K562 (cell line): ENCODE measurements at regions of chr6 and their contacts with region 1.

Region 1: GRCh38 chr6:39228992-39229767 is at the start of gene KCNK5:
- DNase-seq: peak; percentile 98
- ATAC-seq: peak; percentile 94
- H3K4me3 ChIP-seq: peak within 1 kb of the TSS; percentile 73
- H3K27ac ChIP-seq: peak within 1 kb of the TSS; percentile 92
- H3K4me1 ChIP-seq: peaks cover 30 to 35% of the 10 kb centered on the region in 2 experiments
- H3K27me3 ChIP-seq: no peaks in the 10 kb centered on the region
- CTCF ChIP-seq: peak; percentile 90 to 97 (median 95)
- EP300 ChIP-seq: no peak
- POLR2A ChIP-seq: peak; percentile 96
- RAD21 ChIP-seq: peak; percentile 70 to 79
- polyA plus RNA-seq, gene KCNK5: 1.5 to 1.9 TPM

Region 2: DNA sequence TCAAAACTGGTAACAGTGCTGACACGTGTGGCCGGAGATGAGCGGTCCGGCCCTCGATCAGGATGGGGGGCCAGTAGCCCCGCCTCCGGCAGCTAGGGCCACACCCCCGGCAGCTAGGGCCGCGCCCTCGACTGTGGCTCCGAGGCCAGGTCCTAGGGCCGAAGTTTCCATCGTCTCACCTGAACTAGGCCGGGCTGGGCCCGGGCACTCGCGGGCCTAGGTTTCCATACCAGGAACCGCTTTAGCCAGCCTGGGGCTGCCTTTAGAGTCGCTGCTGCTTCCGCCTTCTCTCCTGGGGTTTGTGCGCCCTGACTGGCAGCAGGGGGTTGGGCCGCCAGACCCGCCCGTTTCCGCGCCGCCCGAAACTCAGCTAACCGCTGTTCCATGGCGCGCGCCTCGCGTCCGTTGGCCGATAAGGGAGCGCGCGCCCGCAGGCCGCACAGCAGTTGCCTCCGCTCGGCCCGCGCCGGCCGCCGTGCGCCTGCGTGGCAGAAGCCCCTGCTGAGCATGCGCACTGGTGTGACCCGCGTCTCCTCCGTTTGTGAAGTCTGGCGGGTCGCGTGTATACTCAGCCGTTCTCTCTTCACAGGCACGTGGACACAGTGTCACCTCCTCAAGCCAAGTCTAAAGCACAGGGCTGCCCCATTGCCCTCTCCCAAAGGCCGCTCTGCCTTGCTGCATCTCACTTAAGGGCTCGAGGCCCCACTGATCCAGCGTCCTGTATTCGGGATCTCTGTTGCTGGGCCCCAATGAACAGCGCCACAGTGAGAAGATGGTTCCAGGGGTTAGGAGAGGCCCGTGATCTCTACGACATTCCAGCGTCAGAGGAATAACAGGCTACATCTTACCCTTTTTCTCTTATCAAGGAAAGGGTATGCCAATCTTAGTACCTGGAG is 114.2 kb before region 1 on chr6 and contains the start of gene SAYSD1:
- CTCF ChIA-PET with region 1: no interaction called
- POLR2A ChIA-PET with region 1: interaction called, 5 read pairs
- in situ Hi-C with region 1: no loop called
- intact Hi-C with region 1: loop called (anchors 10 kb)
- DNase-seq: peak; percentile 96 to 99 (median 98)
- ATAC-seq: peak; percentile 99
- H3K4me3 ChIP-seq: peak within 1 kb of the TSS; percentile 55
- H3K27ac ChIP-seq: peak within 1 kb of the TSS; percentile 87
- H3K4me1 ChIP-seq: peaks cover 6 to 10% of the 10 kb centered on the region in 2 experiments; a peak in 4 of 5 replicates
- H3K27me3 ChIP-seq: peaks cover 0 to 7% of the 10 kb centered on the region in 2 experiments; a peak in 3 of 5 replicates
- CTCF ChIP-seq: no peak
- EP300 ChIP-seq: peak; percentile 78
- POLR2A ChIP-seq: peak; percentile 95
- RAD21 ChIP-seq: no peak
- polyA plus RNA-seq, gene SAYSD1: 3.5 to 4.2 TPM

Region 3: DNA sequence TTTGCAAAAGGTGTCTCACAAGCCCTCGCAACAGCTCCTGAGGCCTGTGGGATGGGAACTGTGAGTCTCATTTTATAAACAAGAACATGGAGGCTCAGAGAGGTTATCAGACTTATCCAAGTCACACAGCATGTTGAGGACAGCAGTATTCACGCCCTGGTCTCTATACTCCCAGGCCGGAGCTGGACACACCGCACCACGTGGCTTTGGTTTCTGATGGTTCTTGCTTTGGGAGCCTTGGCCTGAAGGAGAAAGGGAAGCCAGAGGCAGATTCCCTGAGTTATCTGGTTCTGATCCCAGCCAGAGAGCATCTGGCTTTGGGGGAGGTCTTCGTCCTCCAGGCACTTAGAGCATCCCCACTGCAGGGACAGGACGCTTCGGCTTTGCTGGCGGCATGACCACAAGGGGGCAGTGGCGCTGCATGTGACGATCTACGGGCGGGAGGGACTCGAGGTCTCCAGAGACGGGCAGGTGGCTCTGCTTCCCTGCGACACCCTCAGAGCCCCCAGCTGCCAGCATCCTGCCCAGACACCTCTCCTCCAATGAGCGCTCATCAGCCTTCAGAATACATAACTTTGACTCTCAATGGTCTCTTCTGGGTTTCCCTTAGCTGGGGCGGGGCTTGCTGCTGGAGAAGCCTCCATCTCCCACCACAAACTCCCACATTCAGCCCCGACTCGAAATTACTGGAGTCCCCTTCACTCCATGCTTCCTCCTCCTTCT is 62.8 kb before region 1 on chr6:
- CTCF ChIA-PET with region 1: no interaction called
- POLR2A ChIA-PET with region 1: no interaction called
- in situ Hi-C with region 1: no loop called
- intact Hi-C with region 1: loop called (anchors 5 kb)
- DNase-seq: peak; percentile 89 to 95 (median 92)
- ATAC-seq: peak; percentile 99
- H3K4me3 ChIP-seq: no peak overlapping the region
- H3K27ac ChIP-seq: no peak overlapping the region
- H3K4me1 ChIP-seq: no peaks in the 10 kb centered on the region
- H3K27me3 ChIP-seq: no peaks in the 10 kb centered on the region; a peak in 2 of 5 replicates
- CTCF ChIP-seq: peak; percentile 97
- EP300 ChIP-seq: no peak
- POLR2A ChIP-seq: no peak
- RAD21 ChIP-seq: peak; percentile 98 to 100

Region 4: DNA sequence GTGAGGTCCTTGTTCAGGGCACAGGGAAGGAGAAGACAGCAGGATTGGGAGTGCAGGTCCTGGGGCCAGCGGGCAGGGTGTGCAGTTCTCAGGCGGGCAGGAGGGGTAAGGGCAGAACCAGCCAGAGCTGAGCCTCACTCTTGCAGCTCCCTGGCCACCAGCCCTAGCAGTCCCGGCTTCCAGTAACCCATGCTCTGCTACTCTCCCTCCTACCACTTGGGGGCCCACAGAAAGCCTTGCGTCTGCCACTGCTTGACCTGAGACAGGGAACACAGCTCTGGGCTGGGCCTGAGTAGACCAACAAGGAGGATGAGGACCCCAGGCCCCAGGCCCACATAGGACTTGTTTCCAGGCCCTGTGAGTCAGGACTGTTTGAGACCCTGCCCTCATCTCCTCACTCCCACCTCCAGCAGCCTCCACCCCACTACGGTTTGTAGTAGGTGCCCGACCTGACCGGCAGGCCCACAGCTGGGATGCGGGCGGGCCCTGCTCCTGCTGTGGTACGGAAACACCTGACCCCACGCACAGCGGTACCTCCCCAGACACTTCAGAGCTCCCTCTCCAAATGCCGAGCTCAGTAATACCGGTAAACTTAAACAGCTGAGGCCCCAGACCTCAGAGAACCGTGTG is 39.1 kb before region 1 on chr6:
- CTCF ChIA-PET with region 1: no interaction called
- POLR2A ChIA-PET with region 1: interaction called, 6 read pairs
- in situ Hi-C with region 1: no loop called
- intact Hi-C with region 1: loop called (anchors 1 kb)
- DNase-seq: peak; percentile 58 to 73 (median 64)
- ATAC-seq: peak; percentile 79
- H3K4me3 ChIP-seq: no peak overlapping the region
- H3K27ac ChIP-seq: no peak overlapping the region
- H3K4me1 ChIP-seq: peaks cover 44 to 48% of the 10 kb centered on the region in 2 experiments
- H3K27me3 ChIP-seq: no peaks in the 10 kb centered on the region
- CTCF ChIP-seq: peak; percentile 70 to 72 (median 71)
- EP300 ChIP-seq: no peak
- POLR2A ChIP-seq: no peak
- RAD21 ChIP-seq: peak; percentile 36 to 62; a peak in 3 of 4 replicates

Region 5: GRCh38 chr6:39218873-39219536 is 10.2 kb before region 1 on chr6:
- CTCF ChIA-PET with region 1: no interaction called
- POLR2A ChIA-PET with region 1: interaction called, 33 read pairs
- in situ Hi-C with region 1: no loop called
- intact Hi-C with region 1: no loop called
- DNase-seq: no peak
- ATAC-seq: no peak
- H3K4me3 ChIP-seq: no peak overlapping the region
- H3K27ac ChIP-seq: peak overlapping the region; percentile 39; the same call in 2 of the 3 replicates
- H3K4me1 ChIP-seq: peaks cover 61 to 71% of the 10 kb centered on the region in 2 experiments
- H3K27me3 ChIP-seq: no peaks in the 10 kb centered on the region
- CTCF ChIP-seq: peak in 1 of 3 experiments; percentile 22; a peak in 1 of 6 replicates
- EP300 ChIP-seq: no peak
- POLR2A ChIP-seq: no peak
- RAD21 ChIP-seq: peak; percentile 26 to 27; a peak in 3 of 4 replicates

Region 6: GRCh38 chr6:39239527-39240154 is 10.5 kb after region 1 on chr6:
- CTCF ChIA-PET with region 1: no interaction called
- POLR2A ChIA-PET with region 1: interaction called, 25 read pairs
- in situ Hi-C with region 1: no loop called
- intact Hi-C with region 1: no loop called
- DNase-seq: peak in 1 of 4 experiments; percentile 11
- ATAC-seq: no peak; the same call in 1 of the 3 replicates
- H3K4me3 ChIP-seq: no peak overlapping the region
- H3K27ac ChIP-seq: no peak overlapping the region
- H3K4me1 ChIP-seq: peaks cover 5 to 12% of the 10 kb centered on the region in 2 experiments; a peak in 3 of 5 replicates
- H3K27me3 ChIP-seq: no peaks in the 10 kb centered on the region
- CTCF ChIP-seq: no peak
- EP300 ChIP-seq: no peak
- POLR2A ChIP-seq: no peak
- RAD21 ChIP-seq: no peak

Region 7: GRCh38 chr6:39302669-39303424 is 73.7 kb after region 1 on chr6:
- CTCF ChIA-PET with region 1: interaction called, 6 read pairs
- POLR2A ChIA-PET with region 1: interaction called, 4 read pairs
- in situ Hi-C with region 1: no loop called
- intact Hi-C with region 1: loop called (anchors 2 kb)
- DNase-seq: peak; percentile 89 to 94 (median 92)
- ATAC-seq: peak; percentile 95
- H3K4me3 ChIP-seq: no peak overlapping the region
- H3K27ac ChIP-seq: no peak overlapping the region
- H3K4me1 ChIP-seq: peaks cover 0 to 13% of the 10 kb centered on the region in 2 experiments; a peak in 3 of 5 replicates
- H3K27me3 ChIP-seq: peaks cover 27 to 66% of the 10 kb centered on the region in 2 experiments
- CTCF ChIP-seq: peak; percentile 97 to 98 (median 98)
- EP300 ChIP-seq: no peak
- POLR2A ChIP-seq: no peak
- RAD21 ChIP-seq: peak; percentile 99 to 100